HepG2 (cell line): ENCODE measurements at regions of chr16 and their contacts with region 1.

Region 1: GRCh38 chr16:63289852-63290460 is 1253.7 kb upstream of the CDH8 start:
- DNase-seq: peak; percentile 44
- ATAC-seq: peak; percentile 97
- H3K4me3 ChIP-seq: no peak overlapping the region
- H3K27ac ChIP-seq: no peak overlapping the region
- H3K4me1 ChIP-seq: no peaks in the 10 kb centered on the region
- H3K27me3 ChIP-seq: no peaks in the 10 kb centered on the region
- CTCF ChIP-seq: peak; percentile 82
- EP300 ChIP-seq: no peak
- POLR2A ChIP-seq: no peak
- RAD21 ChIP-seq: peak; percentile 40; the same call in 1 of the 2 replicates

Region 2: DNA sequence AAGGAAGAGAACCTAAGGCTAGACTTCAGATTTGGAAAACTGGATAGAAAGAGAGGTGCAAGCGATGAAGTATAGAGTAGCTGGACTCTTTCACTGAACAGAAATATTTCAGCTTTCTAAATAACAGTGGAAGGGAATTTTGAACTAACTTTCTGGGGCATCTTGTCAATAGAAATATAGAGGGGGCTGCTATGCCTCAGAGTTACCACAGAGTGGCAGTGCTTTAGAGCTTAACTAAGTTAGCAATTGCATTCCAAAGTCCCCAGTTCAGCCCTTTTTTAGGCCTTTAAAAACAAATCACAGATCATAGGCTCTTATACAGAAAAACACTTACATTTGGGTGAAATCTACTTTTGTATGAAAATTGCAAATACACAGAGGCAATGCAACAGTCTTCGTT is 1099.5 kb before region 1 on chr16:
- CTCF ChIA-PET with region 1: interaction called, 14 read pairs
- POLR2A ChIA-PET with region 1: no interaction called
- in situ Hi-C with region 1: loop called (anchors 5 kb)
- intact Hi-C with region 1: loop called (anchors 1 kb)
- DNase-seq: peak; percentile 24
- ATAC-seq: peak; percentile 85
- H3K4me3 ChIP-seq: no peak overlapping the region
- H3K27ac ChIP-seq: no peak overlapping the region
- H3K4me1 ChIP-seq: no peaks in the 10 kb centered on the region
- H3K27me3 ChIP-seq: no peaks in the 10 kb centered on the region
- CTCF ChIP-seq: peak; percentile 41; the same call in 1 of the 2 replicates
- EP300 ChIP-seq: no peak
- POLR2A ChIP-seq: no peak
- RAD21 ChIP-seq: no peak

Region 3: GRCh38 chr16:62225697-62226280 is 1064.2 kb before region 1 on chr16:
- CTCF ChIA-PET with region 1: interaction called, 16 read pairs
- POLR2A ChIA-PET with region 1: no interaction called
- in situ Hi-C with region 1: loop called (anchors 10 kb)
- intact Hi-C with region 1: loop called (anchors 1 kb)
- DNase-seq: peak; percentile 76
- ATAC-seq: peak; percentile 97
- H3K4me3 ChIP-seq: no peak overlapping the region
- H3K27ac ChIP-seq: no peak overlapping the region
- H3K4me1 ChIP-seq: no peaks in the 10 kb centered on the region
- H3K27me3 ChIP-seq: no peaks in the 10 kb centered on the region
- CTCF ChIP-seq: peak; percentile 57
- EP300 ChIP-seq: no peak
- POLR2A ChIP-seq: no peak
- RAD21 ChIP-seq: no peak

Region 4: DNA sequence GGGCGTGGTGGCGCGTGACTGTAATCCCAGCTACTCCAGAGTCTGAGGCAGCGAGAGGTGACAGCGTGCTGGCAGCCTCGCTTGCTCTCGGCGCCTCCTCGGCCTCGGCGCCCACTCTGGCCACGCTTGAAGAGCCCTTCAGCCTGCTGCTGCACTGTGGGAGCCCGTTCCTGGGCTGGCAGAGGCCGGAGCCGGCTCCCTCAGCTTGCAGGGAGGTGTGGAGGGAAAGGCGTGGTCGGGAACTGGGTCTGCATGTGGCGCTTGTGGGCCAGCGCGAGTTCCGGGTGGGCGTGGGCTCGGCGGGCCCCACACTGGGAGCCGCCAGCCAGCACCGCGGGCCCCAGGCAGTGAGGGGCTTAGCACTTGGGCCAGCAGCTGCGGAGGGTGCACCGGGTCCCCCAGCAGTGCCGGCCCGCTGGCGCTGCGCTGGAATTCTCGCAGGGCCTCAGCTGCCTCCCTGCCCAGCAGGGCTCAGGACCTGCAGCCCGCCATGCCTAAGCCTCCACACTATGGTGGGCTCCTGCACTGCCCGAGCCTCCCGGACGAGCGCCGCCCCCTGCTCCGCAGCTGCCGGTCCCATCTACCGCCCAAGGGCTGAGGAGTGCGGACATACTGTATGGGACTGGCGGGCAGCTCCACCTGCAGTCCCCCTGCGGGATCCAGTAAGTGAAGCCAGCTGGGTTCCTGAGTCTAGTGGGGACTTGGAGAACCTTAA is 160.4 kb before region 1 on chr16:
- CTCF ChIA-PET with region 1: no interaction called
- POLR2A ChIA-PET with region 1: no interaction called
- in situ Hi-C with region 1: no loop called
- intact Hi-C with region 1: no loop called
- DNase-seq: no peak
- ATAC-seq: no peak
- H3K4me3 ChIP-seq: no peak overlapping the region
- H3K27ac ChIP-seq: no peak overlapping the region
- H3K4me1 ChIP-seq: no peaks in the 10 kb centered on the region
- H3K27me3 ChIP-seq: no peaks in the 10 kb centered on the region
- CTCF ChIP-seq: no peak
- EP300 ChIP-seq: no peak
- POLR2A ChIP-seq: no peak
- RAD21 ChIP-seq: no peak